Left colon (tissue), 2 donors: ENCODE measurements at regions of chr5 and their contacts with region 1.

Region 1: DNA sequence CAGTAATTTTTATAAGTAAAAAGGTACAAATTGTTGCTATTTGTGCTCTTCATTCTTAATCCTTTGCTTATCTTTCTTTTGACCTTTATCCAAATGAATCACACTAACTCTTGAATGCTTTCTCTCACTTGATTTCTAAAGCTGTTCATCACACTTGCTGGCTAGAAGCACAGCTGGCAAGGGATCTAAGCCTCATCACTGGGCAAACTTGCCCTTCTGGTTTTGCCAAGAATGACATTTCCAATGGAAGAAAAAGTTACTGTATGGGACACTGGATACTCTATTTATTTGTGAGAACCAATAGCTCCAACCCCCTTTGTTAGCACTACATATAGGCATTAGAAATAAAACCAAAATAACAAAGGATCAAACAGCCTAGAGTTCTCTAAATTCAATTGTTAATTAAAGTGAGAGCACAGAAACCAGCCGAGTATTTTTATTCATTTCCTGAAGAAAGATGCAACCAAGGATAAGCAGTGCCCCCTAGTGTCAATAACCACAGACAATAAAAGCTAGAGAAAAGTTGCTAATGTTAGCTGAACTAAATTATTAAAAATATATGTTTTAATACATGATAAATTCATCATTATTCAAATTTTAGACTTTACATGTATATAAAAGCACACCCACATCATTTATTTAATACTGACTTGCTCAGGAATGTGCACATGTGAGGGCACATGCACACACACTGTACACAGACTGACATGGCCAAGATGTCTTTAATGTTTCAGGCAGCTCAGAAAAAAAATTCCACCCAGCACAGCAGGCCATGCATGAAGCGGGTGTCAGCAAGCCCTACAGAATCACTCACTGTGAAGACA is 59.8 kb upstream of the POU5F2 start:
- DNase-seq: no peak
- ATAC-seq: peak; percentile 64

Region 2: GRCh38 chr5:93421987-93422401 is 379.2 kb before region 1 on chr5:
- intact Hi-C with region 1: no loop called
- DNase-seq: no peak
- ATAC-seq: no peak

Region 3: GRCh38 chr5:93596676-93597461 is 204.3 kb before region 1 on chr5:
- intact Hi-C with region 1: loop called in 1 of 2 experiments (anchors 10 kb)
- DNase-seq: peak; percentile 64 to 77
- ATAC-seq: peak; percentile 100

Region 4: GRCh38 chr5:93870649-93871048 is 69.4 kb after region 1 on chr5:
- intact Hi-C with region 1: no loop called
- DNase-seq: no peak
- ATAC-seq: no peak

Region 5: GRCh38 chr5:94268226-94268625 is 467.0 kb after region 1 on chr5:
- intact Hi-C with region 1: no loop called
- DNase-seq: no peak
- ATAC-seq: no peak